Ascending aorta (tissue), 2 donors: ENCODE measurements at regions of chr19 and their contacts with region 1.

Region 1: DNA sequence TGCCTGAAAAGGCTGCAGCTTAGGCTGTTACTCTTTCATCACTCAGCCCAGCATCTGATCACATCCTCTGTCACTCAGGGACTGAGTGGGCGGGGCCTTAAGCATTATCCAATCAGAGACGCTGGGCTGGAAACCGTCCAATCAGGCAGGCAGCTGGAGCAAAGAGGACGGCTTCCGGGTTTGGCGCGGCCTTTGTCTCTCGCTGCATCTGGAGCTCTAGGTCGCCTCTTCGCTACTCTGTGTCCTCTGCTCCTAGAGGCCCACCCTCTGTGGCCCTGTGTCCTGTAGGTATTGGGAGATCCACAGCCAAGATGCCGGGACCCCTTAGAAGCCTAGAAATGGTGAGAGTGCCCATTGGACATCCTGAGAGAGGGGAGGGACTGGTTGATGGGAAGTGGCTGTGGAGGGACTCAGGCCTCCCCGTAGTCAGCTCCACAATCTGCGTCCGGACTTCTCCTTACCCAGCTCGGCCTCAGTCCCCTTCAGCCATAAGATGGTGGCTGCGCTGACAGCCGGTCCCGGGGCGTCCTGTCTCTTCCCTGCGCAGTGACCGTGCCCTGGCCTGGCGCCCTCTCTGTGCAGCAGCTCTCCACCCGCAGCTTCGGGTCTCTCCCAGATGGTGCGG is at the start of gene ZNF486:
- DNase-seq: peak; percentile 92 to 98
- H3K4me3 ChIP-seq: peak within 1 kb of the TSS; percentile 57 to 71
- H3K27ac ChIP-seq: peak within 1 kb of the TSS; percentile 67 to 72
- H3K4me1 ChIP-seq: no peaks in the 10 kb centered on the region
- H3K27me3 ChIP-seq: no peaks in the 10 kb centered on the region
- CTCF ChIP-seq: no peak
- total RNA-seq, gene ZNF486: 1.1 TPM

Region 2: GRCh38 chr19:19776041-19777008 is 390.8 kb before region 1 on chr19:
- intact Hi-C with region 1: loop called (anchors 1 kb)
- DNase-seq: peak; percentile 97 to 100
- H3K4me3 ChIP-seq: peak overlapping the region; percentile 71 to 82
- H3K27ac ChIP-seq: peak overlapping the region; percentile 50 to 56
- H3K4me1 ChIP-seq: peaks cover 5 to 11% of the 10 kb centered on the region in 2 donors
- H3K27me3 ChIP-seq: no peaks in the 10 kb centered on the region
- CTCF ChIP-seq: no peak

Region 3: DNA sequence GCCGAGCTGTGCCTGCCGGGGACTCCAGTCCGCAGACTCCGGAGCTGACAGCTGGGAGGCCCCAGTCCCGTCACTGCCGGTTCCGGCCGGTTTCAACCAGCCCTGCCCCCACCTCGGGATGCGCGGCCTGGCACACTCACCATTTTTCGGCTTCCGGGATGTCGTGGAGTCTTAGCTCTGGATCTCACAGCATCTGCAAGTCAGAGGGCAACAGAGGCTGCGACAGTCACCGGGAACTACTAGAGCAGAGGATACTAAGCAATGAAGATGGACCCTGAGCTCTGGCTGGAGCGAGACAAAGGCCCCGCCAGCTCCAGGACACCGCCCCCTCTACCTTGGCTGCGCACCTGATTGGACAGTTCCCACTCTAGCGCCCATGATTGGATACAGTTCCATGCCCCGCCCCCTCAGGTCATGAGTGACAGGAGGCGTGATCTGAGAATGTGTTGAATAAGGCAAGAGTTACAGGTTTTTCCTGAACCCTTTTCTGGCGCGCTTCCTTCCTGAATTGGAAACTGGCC is 127.9 kb before region 1 on chr19 and contains the start of gene ZNF682:
- intact Hi-C with region 1: loop called (anchors 1 kb)
- DNase-seq: peak; percentile 89 to 98
- H3K4me3 ChIP-seq: peak within 1 kb of the TSS; percentile 75 to 82
- H3K27ac ChIP-seq: peak within 1 kb of the TSS; percentile 45 to 51
- H3K4me1 ChIP-seq: peaks cover 0 to 6% of the 10 kb centered on the region in 2 donors
- H3K27me3 ChIP-seq: no peaks in the 10 kb centered on the region
- CTCF ChIP-seq: no peak
- total RNA-seq, gene ZNF682: 1.1 TPM

Region 4: GRCh38 chr19:20077791-20078463 is 89.2 kb before region 1 on chr19 and contains the start of gene ZNF90:
- intact Hi-C with region 1: loop called (anchors 5 kb)
- DNase-seq: peak; percentile 92 to 98
- H3K4me3 ChIP-seq: peak within 1 kb of the TSS; percentile 68 to 71
- H3K27ac ChIP-seq: peak within 1 kb of the TSS; percentile 6 to 54
- H3K4me1 ChIP-seq: peaks cover 0 to 3% of the 10 kb centered on the region in 2 donors
- H3K27me3 ChIP-seq: no peaks in the 10 kb centered on the region
- CTCF ChIP-seq: no peak
- total RNA-seq, gene ZNF90: not detected

Region 5: DNA sequence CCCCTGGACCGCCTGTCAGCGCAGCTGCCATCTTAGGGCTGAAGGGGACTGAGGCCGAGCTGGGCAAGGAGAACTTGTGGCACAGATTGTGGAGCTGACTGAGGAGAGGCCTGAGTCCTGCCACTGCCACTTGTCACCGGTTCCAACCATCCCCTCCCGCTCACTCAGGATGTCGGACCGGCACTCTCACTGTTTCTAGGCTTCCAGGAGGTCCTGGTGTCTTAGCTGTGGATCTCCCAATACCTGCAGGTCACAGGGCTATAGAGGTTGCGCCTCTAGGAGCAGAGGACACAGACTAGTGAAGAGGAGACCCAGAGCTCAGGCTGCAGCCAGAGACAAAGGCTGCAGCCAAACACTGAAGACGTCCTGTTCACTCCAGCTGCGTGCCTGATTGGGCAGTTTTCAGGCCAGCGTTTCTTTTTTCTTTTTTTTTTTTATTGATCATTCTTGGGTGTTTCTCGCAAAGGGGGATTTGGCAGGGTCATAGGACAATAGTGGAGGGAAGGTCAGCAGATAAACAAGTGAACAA is 15.5 kb before region 1 on chr19:
- intact Hi-C with region 1: no loop called
- DNase-seq: no peak
- H3K4me3 ChIP-seq: no peak overlapping the region
- H3K27ac ChIP-seq: no peak overlapping the region
- H3K4me1 ChIP-seq: no peaks in the 10 kb centered on the region
- H3K27me3 ChIP-seq: no peaks in the 10 kb centered on the region
- CTCF ChIP-seq: no peak

Region 6: GRCh38 chr19:20209051-20209450 is 41.9 kb after region 1 on chr19:
- intact Hi-C with region 1: no loop called
- DNase-seq: no peak
- H3K4me3 ChIP-seq: no peak overlapping the region
- H3K27ac ChIP-seq: no peak overlapping the region
- H3K4me1 ChIP-seq: no peaks in the 10 kb centered on the region
- H3K27me3 ChIP-seq: no peaks in the 10 kb centered on the region
- CTCF ChIP-seq: no peak

Region 7: GRCh38 chr19:21141787-21142464 is 974.8 kb after region 1 on chr19 and contains the start of gene ZNF431:
- intact Hi-C with region 1: loop called (anchors 5 kb)
- DNase-seq: peak; percentile 78 to 95
- H3K4me3 ChIP-seq: peak within 1 kb of the TSS; percentile 74 to 82
- H3K27ac ChIP-seq: peak within 1 kb of the TSS; percentile 68 to 70
- H3K4me1 ChIP-seq: peaks cover 0 to 5% of the 10 kb centered on the region in 2 donors
- H3K27me3 ChIP-seq: no peaks in the 10 kb centered on the region
- CTCF ChIP-seq: no peak
- total RNA-seq, gene ZNF431: 10.2 TPM